MCF 10A (cell line): ENCODE measurements at regions of chr5 and their contacts with region 1.

Region 1: DNA sequence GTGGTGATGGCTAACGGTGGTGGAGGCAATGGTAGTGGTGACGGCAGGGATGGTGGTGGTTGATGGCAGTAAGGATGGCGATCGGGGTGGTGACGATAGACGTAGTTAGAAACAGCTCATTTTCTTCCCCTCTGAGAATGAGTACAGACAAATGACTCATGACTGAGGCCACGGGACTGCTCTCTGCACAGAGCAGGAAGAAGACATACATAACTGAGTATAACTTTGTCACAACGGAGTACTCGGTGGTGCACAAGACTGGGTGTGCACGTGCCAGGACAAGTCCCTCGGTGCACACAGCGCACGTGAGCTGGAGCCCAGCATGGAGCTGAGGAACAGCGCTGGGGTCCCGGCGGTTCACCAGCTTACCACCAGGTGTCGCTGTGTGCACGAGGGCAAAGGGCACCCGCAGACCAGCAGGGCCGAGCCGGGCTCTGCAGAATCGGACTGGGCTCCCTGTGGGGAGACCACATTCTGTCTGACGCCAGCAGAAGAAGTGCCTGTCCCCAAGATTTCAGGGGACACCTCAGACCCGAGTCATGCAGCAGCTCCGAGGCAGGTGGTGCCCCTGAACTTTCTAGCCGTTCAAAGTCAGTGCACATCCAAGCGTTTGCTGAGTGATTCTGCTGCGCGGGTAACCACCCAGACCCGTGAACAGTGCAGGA is 188.6 kb downstream of the FSTL4 start:
- DNase-seq: peak; percentile 75
- H3K4me3 Mint-ChIP-seq: no peak overlapping the region
- H3K27ac Mint-ChIP-seq: no peak overlapping the region
- H3K4me1 Mint-ChIP-seq: peaks cover 15% of the 10 kb centered on the region
- H3K27me3 Mint-ChIP-seq: no peaks in the 10 kb centered on the region
- CTCF ChIP-seq: peak; percentile 99

Region 2: DNA sequence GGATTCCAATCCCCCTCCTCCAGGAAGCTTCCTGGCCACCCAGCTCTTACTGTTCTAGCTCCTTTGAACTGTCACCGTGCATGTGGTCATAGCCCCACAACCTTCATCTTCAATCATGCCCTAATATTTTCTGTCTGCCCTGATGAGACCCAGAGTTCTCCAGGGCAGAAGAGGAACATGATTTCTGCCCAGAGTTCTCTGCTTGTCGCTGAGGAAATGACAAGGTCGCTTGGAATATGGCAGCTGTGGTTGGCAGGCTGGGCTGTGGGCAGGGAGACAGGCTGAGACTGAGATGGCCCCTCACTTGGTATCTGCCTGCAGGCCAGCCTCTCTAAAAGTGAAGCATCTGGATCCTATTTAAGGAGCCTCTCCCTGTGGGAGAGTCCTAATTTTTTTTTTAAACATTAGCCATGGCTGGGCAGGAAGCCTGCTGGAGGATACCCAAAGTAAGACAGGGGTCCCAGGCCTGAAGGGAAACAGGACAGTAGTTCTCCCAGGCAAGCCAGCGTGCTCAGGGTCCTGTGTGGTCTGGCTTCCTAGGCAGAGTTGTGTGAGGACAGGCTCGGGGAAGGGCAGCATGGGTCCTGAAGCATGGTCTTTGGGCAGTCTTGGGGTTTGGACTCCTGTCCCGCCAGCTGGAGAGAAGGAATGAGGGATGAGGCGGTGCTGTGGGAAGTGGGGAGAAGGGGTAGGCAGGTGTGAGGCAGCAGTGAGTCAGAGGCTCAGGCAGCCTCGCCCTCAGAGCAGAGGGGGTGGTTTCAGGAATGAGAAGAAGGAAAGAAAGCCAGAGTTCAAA is 53.5 kb before region 1 on chr5:
- CTCF ChIA-PET with region 1: interaction called, 16 read pairs
- POLR2A ChIA-PET with region 1: interaction called, 4 read pairs
- intact Hi-C with region 1: no loop called
- DNase-seq: peak; percentile 68
- H3K4me3 Mint-ChIP-seq: no peak overlapping the region
- H3K27ac Mint-ChIP-seq: peak overlapping the region; percentile 20
- H3K4me1 Mint-ChIP-seq: peaks cover 17% of the 10 kb centered on the region
- H3K27me3 Mint-ChIP-seq: peaks cover 9% of the 10 kb centered on the region
- CTCF ChIP-seq: no peak

Region 3: GRCh38 chr5:133440467-133441115 is 16.8 kb after region 1 on chr5:
- CTCF ChIA-PET with region 1: interaction called, 23 read pairs
- POLR2A ChIA-PET with region 1: interaction called, 4 read pairs
- intact Hi-C with region 1: no loop called
- DNase-seq: peak; percentile 30
- H3K4me3 Mint-ChIP-seq: no peak overlapping the region
- H3K27ac Mint-ChIP-seq: no peak overlapping the region
- H3K4me1 Mint-ChIP-seq: peaks cover 5% of the 10 kb centered on the region
- H3K27me3 Mint-ChIP-seq: no peaks in the 10 kb centered on the region
- CTCF ChIP-seq: no peak

Region 4: GRCh38 chr5:133460172-133460758 is 36.5 kb after region 1 on chr5:
- CTCF ChIA-PET with region 1: interaction called, 104 read pairs
- POLR2A ChIA-PET with region 1: no interaction called
- intact Hi-C with region 1: loop called (anchors 1 kb)
- DNase-seq: peak; percentile 62
- H3K4me3 Mint-ChIP-seq: no peak overlapping the region
- H3K27ac Mint-ChIP-seq: no peak overlapping the region
- H3K4me1 Mint-ChIP-seq: peaks cover 21% of the 10 kb centered on the region
- H3K27me3 Mint-ChIP-seq: no peaks in the 10 kb centered on the region
- CTCF ChIP-seq: peak; percentile 95

Region 5: GRCh38 chr5:133527311-133527710 is 103.6 kb after region 1 on chr5:
- CTCF ChIA-PET with region 1: interaction called, 19 read pairs
- POLR2A ChIA-PET with region 1: no interaction called
- intact Hi-C with region 1: no loop called
- DNase-seq: no peak
- H3K4me3 Mint-ChIP-seq: no peak overlapping the region
- H3K27ac Mint-ChIP-seq: no peak overlapping the region
- H3K4me1 Mint-ChIP-seq: no peaks in the 10 kb centered on the region
- H3K27me3 Mint-ChIP-seq: peaks cover 31% of the 10 kb centered on the region
- CTCF ChIP-seq: no peak

Region 6: DNA sequence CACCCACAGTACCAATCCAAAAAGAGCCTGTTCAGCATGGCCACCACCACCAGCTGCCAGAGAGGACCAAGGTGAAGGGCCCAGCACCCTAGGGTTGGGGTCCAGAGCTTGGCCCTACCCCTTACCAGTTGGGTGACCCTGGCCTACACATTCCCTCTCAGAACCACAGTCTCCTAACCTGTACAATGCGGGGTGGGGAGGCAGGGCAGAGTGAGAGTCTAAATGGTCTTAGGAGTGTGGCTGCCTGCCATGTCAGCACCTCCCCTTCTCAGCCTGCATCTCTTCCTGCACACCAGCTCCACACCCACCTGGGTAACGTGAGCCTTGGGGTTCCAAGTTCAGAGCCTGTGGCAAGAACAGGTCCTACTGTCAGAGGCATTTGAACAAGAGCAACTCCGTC is 452.5 kb after region 1 on chr5:
- CTCF ChIA-PET with region 1: interaction called, 197 read pairs
- POLR2A ChIA-PET with region 1: no interaction called
- intact Hi-C with region 1: no loop called
- DNase-seq: no peak
- H3K4me3 Mint-ChIP-seq: no peak overlapping the region
- H3K27ac Mint-ChIP-seq: no peak overlapping the region
- H3K4me1 Mint-ChIP-seq: no peaks in the 10 kb centered on the region
- H3K27me3 Mint-ChIP-seq: peaks cover 72% of the 10 kb centered on the region
- CTCF ChIP-seq: no peak

Region 7: DNA sequence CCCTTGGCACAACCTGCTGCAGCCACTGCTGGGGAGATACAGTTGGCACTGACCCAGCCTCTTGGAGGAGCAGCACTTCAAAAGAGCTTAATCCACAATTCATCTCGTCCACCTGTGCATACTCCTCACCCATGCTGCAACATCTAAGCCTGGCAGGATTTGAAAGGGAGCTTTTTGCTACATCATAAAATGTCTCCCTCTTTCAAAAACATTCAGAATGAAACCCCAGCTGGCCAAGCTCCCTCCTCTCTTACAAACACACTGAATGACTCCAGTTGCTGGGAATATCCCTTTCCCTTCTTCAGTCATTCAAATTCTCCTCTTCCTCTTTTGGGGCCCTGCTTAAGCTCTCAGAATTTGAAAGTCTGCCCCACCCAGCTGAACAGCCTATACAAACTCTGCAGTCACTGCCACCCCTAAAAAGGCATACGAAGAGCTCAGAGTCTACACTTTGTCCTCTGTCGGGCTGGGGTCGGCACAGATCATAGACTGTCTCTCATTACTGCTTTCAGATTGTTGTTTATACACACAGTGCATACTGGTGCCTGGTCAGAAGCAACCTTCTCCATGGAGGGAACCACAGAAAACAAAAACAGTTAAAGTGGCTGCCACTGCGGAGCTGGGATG is 553.5 kb after region 1 on chr5:
- CTCF ChIA-PET with region 1: interaction called, 45 read pairs
- POLR2A ChIA-PET with region 1: no interaction called
- intact Hi-C with region 1: no loop called
- DNase-seq: no peak
- H3K4me3 Mint-ChIP-seq: no peak overlapping the region
- H3K27ac Mint-ChIP-seq: peak overlapping the region; percentile 49
- H3K4me1 Mint-ChIP-seq: no peaks in the 10 kb centered on the region
- H3K27me3 Mint-ChIP-seq: no peaks in the 10 kb centered on the region
- CTCF ChIP-seq: no peak